ENCODE measurements at regions of chr18 and their contacts with region 1.

Region 1: DNA sequence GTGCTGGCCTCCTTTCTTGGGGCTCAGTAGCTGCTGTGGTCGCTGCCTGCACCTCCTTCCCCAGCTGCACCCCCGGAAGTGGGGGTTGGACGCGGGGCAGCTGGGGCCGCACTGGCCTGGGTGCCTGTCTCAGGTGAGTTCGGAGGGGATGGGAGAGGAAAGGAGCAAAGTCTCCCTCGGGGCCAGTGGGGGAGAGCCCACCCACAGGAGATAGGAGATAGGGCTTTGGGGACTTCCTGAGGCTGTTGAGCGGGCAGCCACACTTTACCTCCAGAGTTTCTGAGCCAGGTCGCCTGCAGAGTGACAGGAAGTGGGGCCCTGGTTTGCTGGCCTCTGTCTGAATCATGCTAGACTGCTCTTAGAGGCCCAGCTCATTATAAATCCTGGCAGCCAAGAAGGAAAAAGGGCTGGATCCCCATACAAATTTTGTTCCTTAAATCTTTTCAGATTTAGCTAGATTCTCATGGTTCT is 8.1 kb downstream of the MBP start:
- DNase-seq: peak; percentile 69
- ATAC-seq: peak; percentile 71
- H3K4me3 ChIP-seq: peak overlapping the region; percentile 72
- H3K27ac ChIP-seq: peak overlapping the region; percentile 92
- H3K4me1 ChIP-seq: peaks cover 43% of the 10 kb centered on the region
- H3K27me3 ChIP-seq: no peaks in the 10 kb centered on the region
- CTCF ChIP-seq: no peak
- EP300 ChIP-seq: 0 out of 4 replicates have a peak, but pooled peaks of 1 of the 2 experiments have one; percentile 32
- POLR2A ChIP-seq: no peak; the same call in 1 of the 2 replicates
- RAD21 ChIP-seq: no peak

Region 2: DNA sequence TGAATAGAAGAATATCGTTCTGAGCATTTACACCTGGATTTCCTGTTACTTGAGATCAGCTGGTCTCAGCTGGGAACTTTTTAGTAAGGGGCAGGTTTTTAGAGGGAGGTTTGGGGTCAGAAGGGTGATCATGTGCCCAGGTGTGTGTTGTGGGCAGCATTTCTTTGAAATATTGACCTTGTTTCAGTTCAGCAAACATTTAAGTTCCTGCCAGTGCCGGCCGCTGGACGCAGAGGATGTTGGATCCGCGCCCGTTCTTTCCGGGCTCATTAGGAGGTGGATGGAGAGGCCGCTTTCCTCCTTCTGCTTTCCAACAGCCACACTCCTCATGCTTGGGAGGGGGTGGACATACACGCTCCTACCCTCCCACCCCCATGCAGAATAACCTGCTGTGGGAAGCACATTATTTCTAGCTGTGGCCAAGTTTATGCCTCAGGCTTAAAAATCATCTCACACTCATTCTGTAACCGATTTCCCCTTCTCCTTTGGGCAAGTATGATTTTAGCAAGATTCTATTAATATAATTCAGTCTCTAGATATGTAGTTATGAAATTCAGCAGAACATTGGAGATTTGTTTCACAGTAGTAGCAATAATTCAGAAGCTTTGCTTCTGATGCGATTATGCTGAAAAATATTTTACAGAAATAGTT is 170.8 kb before region 1 on chr18:
- CTCF ChIA-PET with region 1: no interaction called
- POLR2A ChIA-PET with region 1: no interaction called
- RAD21 ChIA-PET with region 1: no interaction called
- SMC1A ChIA-PET with region 1: no interaction called
- in situ Hi-C with region 1: no loop called
- intact Hi-C with region 1: no loop called
- DNase-seq: no peak
- ATAC-seq: no peak
- H3K4me3 ChIP-seq: no peak overlapping the region
- H3K27ac ChIP-seq: no peak overlapping the region
- H3K4me1 ChIP-seq: no peaks in the 10 kb centered on the region
- H3K27me3 ChIP-seq: no peaks in the 10 kb centered on the region
- CTCF ChIP-seq: no peak
- EP300 ChIP-seq: no peak
- POLR2A ChIP-seq: no peak
- RAD21 ChIP-seq: no peak

Region 3: GRCh38 chr18:77054606-77055428 is 69.7 kb before region 1 on chr18:
- CTCF ChIA-PET with region 1: interaction called, 16 read pairs
- POLR2A ChIA-PET with region 1: interaction called, 9 read pairs
- RAD21 ChIA-PET with region 1: interaction called, 3 read pairs
- SMC1A ChIA-PET with region 1: interaction called, 7 read pairs
- in situ Hi-C with region 1: loop called (anchors 10 kb)
- intact Hi-C with region 1: loop called (anchors 2 kb)
- DNase-seq: peak; percentile 80
- ATAC-seq: peak; percentile 93
- H3K4me3 ChIP-seq: peak overlapping the region; percentile 53
- H3K27ac ChIP-seq: peak overlapping the region; percentile 88
- H3K4me1 ChIP-seq: peaks cover 46% of the 10 kb centered on the region
- H3K27me3 ChIP-seq: no peaks in the 10 kb centered on the region
- CTCF ChIP-seq: peak; percentile 73 to 78 (median 75)
- EP300 ChIP-seq: peak; percentile 70 to 74
- POLR2A ChIP-seq: no peak; the same call in 1 of the 2 replicates
- RAD21 ChIP-seq: peak; percentile 58

Region 4: DNA sequence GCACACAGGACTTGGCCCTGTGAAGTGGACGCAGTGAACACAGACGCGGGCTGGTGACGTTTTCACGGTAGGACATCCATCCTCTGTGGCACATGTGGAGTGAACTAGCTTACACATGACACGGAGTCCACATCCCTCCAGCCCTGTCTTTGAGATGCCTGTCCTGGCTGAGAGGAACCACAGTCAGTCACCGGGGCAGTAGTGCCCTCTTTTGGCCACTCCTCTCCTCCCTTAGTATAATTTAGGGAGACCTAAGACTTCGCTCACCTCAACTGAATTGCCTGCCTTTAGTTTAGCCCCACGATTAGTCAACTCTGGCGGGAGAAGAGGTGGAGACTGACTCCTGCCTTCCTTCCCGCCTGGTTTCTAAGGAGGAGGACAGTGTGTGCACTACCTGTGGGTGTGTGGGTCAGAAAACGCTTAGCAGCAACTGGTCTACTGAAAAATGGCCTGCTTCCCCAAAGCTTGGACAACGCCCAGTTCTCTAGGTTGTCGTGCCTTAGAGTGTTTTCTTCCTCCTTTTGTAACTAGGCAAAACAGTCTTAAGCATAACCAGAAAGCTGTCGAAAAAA is 62.5 kb before region 1 on chr18:
- CTCF ChIA-PET with region 1: interaction called, 15 read pairs
- POLR2A ChIA-PET with region 1: interaction called, 9 read pairs
- RAD21 ChIA-PET with region 1: interaction called, 9 read pairs
- SMC1A ChIA-PET with region 1: interaction called, 69 read pairs
- in situ Hi-C with region 1: loop called (anchors 10 kb)
- intact Hi-C with region 1: loop called (anchors 1 kb)
- DNase-seq: no peak
- ATAC-seq: peak; percentile 65
- H3K4me3 ChIP-seq: peak overlapping the region; percentile 2; the same call in 1 of the 2 replicates
- H3K27ac ChIP-seq: peak overlapping the region; percentile 97
- H3K4me1 ChIP-seq: peaks cover 61% of the 10 kb centered on the region
- H3K27me3 ChIP-seq: no peaks in the 10 kb centered on the region
- CTCF ChIP-seq: peak in 2 of 3 experiments; percentile 16 to 26; a peak in 2 of 6 replicates
- EP300 ChIP-seq: no peak
- POLR2A ChIP-seq: no peak; the same call in 1 of the 2 replicates
- RAD21 ChIP-seq: peak; percentile 24; the same call in 1 of the 2 replicates

Region 5: DNA sequence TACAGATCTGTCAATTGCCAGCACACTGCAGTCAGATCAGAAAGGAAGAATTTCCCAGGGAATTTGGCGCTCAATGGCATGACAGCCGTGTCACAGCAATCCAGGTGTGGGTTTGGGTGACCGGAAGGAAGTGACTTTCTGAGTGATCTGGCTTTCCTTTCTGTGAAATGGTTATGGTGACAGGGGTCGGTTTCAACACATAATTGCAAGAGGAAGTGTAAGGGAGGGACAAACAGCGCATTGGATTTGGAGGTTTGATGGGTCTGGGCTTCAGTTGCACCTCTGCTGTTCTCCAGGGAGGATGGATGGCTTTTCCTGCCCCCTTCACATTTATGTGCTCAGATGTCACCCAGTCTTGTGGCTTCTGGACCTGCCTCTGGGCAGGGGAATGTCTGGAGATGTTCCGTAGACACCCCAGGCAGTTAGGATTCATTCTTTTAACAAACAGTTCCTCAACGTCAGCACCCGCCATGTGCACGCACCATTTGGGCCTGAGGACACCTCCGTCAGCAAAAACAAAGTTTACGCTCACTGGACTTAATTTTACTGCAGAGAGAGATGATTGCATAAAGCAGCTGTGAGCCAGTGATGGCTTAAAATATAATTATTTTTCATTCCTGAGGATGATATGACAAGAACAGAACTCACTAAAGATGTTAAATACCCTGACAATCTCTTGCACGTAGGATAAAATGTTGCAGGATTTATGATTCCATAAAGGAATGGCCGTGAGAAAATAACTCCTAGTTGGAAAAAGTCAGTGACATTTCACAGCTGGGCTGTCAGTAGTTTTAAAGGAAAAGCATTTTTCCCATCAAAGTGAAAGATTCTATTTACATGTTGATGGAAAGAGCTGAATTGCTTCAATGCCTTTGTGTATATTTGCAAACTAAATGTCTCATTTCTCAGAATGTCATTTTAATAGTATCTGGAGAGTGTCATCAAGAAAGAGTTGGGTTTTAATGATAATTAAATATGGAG is 28.8 kb before region 1 on chr18:
- CTCF ChIA-PET with region 1: interaction called, 18 read pairs
- POLR2A ChIA-PET with region 1: interaction called, 45 read pairs
- RAD21 ChIA-PET with region 1: interaction called, 73 read pairs
- SMC1A ChIA-PET with region 1: interaction called, 57 read pairs
- in situ Hi-C with region 1: no loop called
- intact Hi-C with region 1: no loop called
- DNase-seq: no peak
- ATAC-seq: no peak
- H3K4me3 ChIP-seq: no peak overlapping the region
- H3K27ac ChIP-seq: no peak overlapping the region; the same call in 1 of the 2 replicates
- H3K4me1 ChIP-seq: peaks cover 51% of the 10 kb centered on the region
- H3K27me3 ChIP-seq: no peaks in the 10 kb centered on the region
- CTCF ChIP-seq: no peak
- EP300 ChIP-seq: no peak
- POLR2A ChIP-seq: no peak
- RAD21 ChIP-seq: no peak

Region 6: GRCh38 chr18:77101410-77102258 is 22.9 kb before region 1 on chr18:
- CTCF ChIA-PET with region 1: interaction called, 49 read pairs
- POLR2A ChIA-PET with region 1: interaction called, 45 read pairs
- RAD21 ChIA-PET with region 1: interaction called, 73 read pairs
- SMC1A ChIA-PET with region 1: interaction called, 57 read pairs
- in situ Hi-C with region 1: no loop called
- intact Hi-C with region 1: loop called (anchors 1 kb)
- DNase-seq: peak; percentile 61
- ATAC-seq: peak; percentile 86
- H3K4me3 ChIP-seq: peak overlapping the region; percentile 56
- H3K27ac ChIP-seq: peak overlapping the region; percentile 99
- H3K4me1 ChIP-seq: peaks cover 80% of the 10 kb centered on the region
- H3K27me3 ChIP-seq: no peaks in the 10 kb centered on the region
- CTCF ChIP-seq: no peak
- EP300 ChIP-seq: 0 out of 4 replicates have a peak, but pooled peaks of 1 of the 2 experiments have one; percentile 52
- POLR2A ChIP-seq: peak; percentile 56
- RAD21 ChIP-seq: no peak

Region 7: GRCh38 chr18:77108001-77108692 is 16.3 kb before region 1 on chr18:
- CTCF ChIA-PET with region 1: interaction called, 49 read pairs
- POLR2A ChIA-PET with region 1: interaction called, 22 read pairs
- RAD21 ChIA-PET with region 1: interaction called, 73 read pairs
- SMC1A ChIA-PET with region 1: interaction called, 45 read pairs
- in situ Hi-C with region 1: no loop called
- intact Hi-C with region 1: no loop called
- DNase-seq: no peak
- ATAC-seq: peak; percentile 42
- H3K4me3 ChIP-seq: no peak overlapping the region; the same call in 1 of the 2 replicates
- H3K27ac ChIP-seq: peak overlapping the region; percentile 78
- H3K4me1 ChIP-seq: peaks cover 46% of the 10 kb centered on the region
- H3K27me3 ChIP-seq: no peaks in the 10 kb centered on the region
- CTCF ChIP-seq: no peak
- EP300 ChIP-seq: no peak
- POLR2A ChIP-seq: no peak
- RAD21 ChIP-seq: no peak

Region 8: GRCh38 chr18:77407733-77408132 is 283.2 kb after region 1 on chr18:
- CTCF ChIA-PET with region 1: no interaction called
- POLR2A ChIA-PET with region 1: no interaction called
- RAD21 ChIA-PET with region 1: no interaction called
- SMC1A ChIA-PET with region 1: no interaction called
- in situ Hi-C with region 1: no loop called
- intact Hi-C with region 1: no loop called
- DNase-seq: no peak
- ATAC-seq: no peak
- H3K4me3 ChIP-seq: no peak overlapping the region
- H3K27ac ChIP-seq: no peak overlapping the region
- H3K4me1 ChIP-seq: no peaks in the 10 kb centered on the region
- H3K27me3 ChIP-seq: no peaks in the 10 kb centered on the region
- CTCF ChIP-seq: no peak
- EP300 ChIP-seq: no peak
- POLR2A ChIP-seq: no peak
- RAD21 ChIP-seq: no peak